ENCODE measurements at regions of chr11 and their contacts with region 1.

Region 1: DNA sequence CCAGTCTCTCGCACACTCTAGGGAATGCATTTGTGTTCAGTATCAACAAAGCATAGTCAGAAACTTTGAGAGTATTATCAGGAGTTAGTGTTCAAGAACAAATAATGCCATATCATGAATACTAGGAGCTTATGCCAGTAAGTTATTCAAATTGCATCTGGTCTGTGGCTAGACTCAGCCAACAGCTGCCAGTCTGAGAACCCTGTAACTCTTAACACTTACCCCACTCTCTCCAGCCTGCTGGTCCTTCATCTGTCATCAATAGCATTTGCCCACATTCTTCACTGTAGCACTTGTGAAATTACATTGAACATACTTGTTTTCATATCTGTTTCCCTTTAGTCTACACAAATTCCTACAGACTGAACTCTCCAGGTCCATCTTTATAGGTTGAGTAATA is 1157.5 kb upstream of the RAG2 start:
- DNase-seq: no peak
- ATAC-seq: no peak

Region 2: GRCh38 chr11:37560991-37561390 is 194.5 kb before region 1 on chr11:
- intact Hi-C with region 1: no loop called
- DNase-seq: no peak
- ATAC-seq: no peak

Region 3: DNA sequence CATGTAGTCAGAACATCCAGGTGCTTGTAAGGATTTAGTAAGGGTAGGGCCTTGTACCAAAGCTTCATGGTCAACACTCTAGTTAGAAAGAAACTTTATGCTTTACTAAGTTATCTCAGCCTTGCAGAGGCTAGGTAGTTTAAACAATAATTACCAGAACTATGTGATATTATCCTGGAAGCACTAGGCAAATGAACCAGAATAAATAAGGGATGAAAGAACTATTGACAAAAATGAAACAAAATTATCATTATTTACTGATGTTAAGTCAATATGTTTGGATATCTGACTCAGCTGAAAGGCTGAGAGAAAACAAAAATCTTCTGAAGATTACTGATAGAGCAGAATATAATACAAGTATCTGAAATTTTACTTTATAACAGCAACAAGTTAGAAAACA is 68.4 kb before region 1 on chr11:
- intact Hi-C with region 1: no loop called
- DNase-seq: no peak
- ATAC-seq: no peak

Region 4: GRCh38 chr11:37718431-37718999 is 37.0 kb before region 1 on chr11:
- intact Hi-C with region 1: loop called in 1 of 2 experiments (anchors 5 kb)
- DNase-seq: no peak
- ATAC-seq: no peak

Measured in left colon (tissue), 2 donors.